Activated CD4-positive, alpha-beta memory T cell treated with anti-CD3 and anti-CD28 coated beads for 36 hours (primary cell): ENCODE measurements at regions of chr14 and their contacts with region 1.

Region 1: DNA sequence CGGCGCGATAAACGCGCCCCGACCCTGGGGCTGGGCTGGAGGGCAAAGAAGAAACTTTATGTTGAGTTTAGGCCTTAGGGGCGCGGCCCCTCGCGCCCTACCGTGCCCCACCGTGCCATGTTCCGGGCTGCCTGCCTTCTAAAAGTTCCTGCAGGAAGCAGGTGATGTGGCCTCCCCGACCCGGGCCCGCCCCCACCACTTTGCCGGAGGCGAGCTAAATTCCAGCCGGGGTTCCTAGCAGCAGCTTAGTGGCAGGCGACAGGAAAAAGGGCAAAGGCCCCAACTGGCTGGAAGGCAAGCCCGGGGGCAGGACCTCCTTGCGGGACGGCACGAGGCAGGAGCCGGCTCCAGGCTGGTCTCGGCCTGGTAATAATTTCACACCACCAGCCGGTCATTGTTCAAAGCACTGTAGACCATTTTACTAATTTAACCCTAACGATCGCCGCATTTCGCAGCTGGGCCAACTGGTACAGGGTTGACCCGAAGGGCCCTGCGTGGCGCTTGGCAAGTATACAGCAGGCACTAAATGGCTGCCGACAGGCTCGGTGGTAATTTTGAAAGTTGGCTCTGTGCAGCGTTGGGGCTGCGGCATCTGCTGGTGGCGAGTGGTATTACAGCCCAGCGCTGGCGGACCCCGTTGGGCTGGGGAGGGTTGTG is 895 bp upstream of the CCDC88C start:
- DNase-seq: peak; percentile 88
- H3K4me3 Mint-ChIP-seq: peak overlapping the region; percentile 61
- H3K27ac Mint-ChIP-seq: peak overlapping the region; percentile 72
- H3K4me1 Mint-ChIP-seq: peaks cover 32% of the 10 kb centered on the region
- H3K27me3 Mint-ChIP-seq: no peaks in the 10 kb centered on the region

Region 2: DNA sequence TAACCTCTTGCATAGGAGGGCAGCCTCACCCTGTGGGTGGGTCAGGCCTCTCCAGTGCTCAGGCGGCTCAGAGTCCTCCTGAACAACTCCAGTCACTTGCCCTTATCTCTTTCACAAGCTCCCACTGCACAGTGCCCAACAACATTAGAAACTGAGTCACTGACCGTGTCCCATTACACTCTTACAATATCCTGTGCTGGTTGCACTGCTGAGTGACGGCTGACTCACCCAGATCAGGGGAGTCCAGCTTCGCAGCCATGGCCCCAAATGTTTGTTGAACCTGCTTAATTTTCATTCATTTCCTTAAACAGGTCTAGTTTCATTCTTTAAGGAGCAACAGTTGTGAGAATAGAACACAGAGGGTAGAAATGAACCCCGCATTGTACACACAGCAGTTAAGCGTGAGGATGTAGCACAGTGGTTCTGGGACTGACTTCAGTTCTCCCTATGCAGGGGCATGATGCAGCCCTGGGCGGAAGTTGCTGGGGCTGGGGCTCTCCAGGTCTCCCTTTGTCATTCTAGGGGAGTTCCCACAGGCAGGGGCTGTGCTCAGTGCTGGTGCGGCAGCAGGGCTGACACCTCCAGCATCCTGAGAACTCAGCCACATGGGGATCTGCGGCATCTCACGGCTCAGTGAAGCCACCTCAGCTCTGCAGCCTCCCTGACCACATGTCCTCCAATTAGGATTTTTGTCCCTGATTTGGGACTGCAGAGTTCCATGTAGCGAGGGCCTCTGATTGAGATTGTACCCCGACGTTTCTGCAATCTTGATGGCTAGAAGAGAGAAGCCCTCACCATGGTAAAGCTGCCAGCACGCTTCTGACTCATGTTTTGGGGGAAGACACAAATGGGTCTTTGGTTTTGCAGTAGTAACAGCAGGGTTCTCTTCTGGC is 190.2 kb before region 1 on chr14:
- CTCF ChIA-PET with region 1: no interaction called
- POLR2A ChIA-PET with region 1: no interaction called
- intact Hi-C with region 1: loop called (anchors 1 kb)
- DNase-seq: peak; percentile 95
- H3K4me3 Mint-ChIP-seq: peak overlapping the region; percentile 59
- H3K27ac Mint-ChIP-seq: peak overlapping the region; percentile 94
- H3K4me1 Mint-ChIP-seq: peaks cover 94% of the 10 kb centered on the region
- H3K27me3 Mint-ChIP-seq: no peaks in the 10 kb centered on the region

Region 3: DNA sequence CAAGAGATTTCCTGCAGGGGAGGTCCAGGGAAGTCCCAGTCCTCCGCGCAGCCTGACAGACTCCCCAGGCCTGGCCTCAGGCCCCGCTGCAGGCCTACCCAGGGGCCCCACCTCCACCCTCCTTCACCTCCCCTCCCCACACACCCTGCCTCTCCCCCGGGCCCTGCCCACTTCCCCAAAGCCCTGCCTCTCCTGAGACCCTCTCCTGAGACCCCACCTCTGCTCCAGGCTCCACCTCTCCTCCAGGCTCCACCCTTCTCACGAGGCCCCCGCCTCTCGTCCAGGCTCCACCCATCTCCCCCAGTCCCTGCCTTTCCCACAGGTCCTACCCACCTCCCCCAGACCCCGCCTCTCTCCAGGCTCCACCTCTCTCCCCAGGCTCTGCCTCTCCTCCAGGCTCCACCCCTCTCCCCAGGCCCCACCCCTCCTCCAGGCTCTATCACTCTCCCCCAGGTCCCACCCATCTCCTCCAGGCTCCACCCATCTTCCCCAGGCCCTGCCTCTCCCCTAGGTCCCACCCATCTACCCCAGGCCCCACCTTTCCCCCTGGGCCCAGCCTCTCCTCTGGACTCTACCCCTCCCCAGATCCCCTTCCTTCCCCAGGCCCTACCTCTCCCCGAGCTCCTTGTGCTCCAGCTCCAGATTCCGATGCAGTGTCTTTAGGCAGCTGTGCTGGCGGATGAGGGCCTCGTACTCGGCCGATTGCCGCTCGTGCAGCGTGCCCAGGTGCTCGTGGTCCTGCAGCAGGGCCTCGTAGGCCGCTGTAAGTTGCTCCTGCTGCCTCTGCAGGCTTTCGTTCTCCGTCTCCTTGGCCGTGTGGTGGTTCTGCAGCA is 115.2 kb before region 1 on chr14:
- CTCF ChIA-PET with region 1: no interaction called
- POLR2A ChIA-PET with region 1: interaction called, 7 read pairs
- intact Hi-C with region 1: loop called (anchors 1 kb)
- DNase-seq: peak; percentile 94
- H3K4me3 Mint-ChIP-seq: peak overlapping the region; percentile 54
- H3K27ac Mint-ChIP-seq: peak overlapping the region; percentile 95
- H3K4me1 Mint-ChIP-seq: peaks cover 56% of the 10 kb centered on the region
- H3K27me3 Mint-ChIP-seq: no peaks in the 10 kb centered on the region

Region 4: DNA sequence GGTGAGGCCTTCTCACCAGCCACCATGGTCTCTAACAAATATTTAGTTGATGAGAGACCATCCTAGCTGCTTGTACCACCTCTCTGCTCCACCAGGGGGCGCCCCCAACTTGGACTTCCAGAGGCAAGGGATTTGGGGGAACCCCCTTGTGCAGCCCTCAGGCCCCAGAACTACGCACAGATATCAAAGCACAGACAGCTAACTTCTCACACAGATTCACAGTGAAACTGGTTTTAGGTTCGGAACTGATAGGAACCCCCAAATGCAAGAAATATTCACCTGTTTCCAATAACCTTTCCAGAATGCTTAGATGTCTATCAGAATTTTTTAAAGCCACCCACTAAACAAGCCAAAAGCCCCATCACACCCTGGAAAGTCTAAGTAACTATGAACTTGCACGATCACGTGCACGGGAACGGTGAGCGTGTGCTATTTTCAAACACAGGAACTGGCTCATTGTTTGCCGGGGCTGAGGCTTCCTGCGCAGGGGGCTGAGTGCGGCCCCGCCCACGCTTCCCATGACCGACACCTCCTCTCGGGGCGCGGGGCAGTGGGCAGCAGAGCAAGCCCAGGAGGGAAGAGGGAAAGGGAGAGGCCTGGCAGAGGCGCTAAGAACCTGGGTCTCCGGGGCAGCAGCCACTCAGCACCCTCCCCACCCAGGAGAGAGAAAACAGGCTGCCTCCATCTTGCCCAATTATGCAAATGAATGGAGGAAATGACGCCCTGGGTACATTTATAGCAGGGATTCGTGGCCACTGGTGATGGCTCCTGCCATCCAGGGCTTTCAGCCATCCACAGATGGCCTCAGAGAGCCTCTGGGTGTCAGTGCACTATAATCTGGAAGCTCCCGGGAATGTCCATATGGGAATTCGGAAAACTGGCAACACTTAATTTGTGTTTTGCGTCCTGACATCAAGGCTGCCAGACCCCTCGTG is 94.6 kb before region 1 on chr14:
- CTCF ChIA-PET with region 1: interaction called, 99 read pairs
- POLR2A ChIA-PET with region 1: interaction called, 38 read pairs
- intact Hi-C with region 1: loop called (anchors 1 kb)
- DNase-seq: peak; percentile 97
- H3K4me3 Mint-ChIP-seq: peak overlapping the region; percentile 82
- H3K27ac Mint-ChIP-seq: peak overlapping the region; percentile 99
- H3K4me1 Mint-ChIP-seq: peaks cover 62% of the 10 kb centered on the region
- H3K27me3 Mint-ChIP-seq: no peaks in the 10 kb centered on the region

Region 5: DNA sequence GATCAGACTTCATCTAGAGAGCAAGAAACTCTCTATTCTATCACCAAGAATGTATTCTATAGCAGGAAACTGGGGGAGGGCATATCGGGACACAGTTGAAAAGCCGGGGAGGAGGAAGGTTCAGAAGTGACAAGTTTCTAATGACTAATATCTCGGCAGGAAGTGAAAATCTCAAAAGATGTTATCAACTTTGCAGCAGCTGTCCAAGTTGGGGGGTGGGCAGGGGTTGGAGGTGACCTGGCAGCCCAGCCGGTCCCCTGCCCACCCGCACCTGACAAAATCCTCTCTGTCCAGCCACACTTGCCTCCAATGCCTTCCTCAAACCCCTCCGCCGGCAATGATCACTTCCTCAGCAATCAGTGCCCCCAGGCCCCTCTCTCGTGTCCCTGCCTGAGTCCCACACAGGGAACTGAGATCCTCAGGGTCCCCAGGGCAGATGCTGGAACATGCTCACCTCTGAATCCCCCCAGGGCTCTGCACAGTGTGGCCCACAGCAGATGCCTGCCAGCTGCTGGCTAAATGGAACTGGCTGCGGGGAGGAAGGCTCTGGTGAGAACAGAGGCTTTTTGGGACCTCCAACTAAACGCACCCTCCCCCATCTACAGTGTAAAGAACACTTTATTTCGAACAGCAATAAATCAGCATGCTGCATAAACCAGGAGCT is 44.8 kb before region 1 on chr14:
- CTCF ChIA-PET with region 1: interaction called, 17 read pairs
- POLR2A ChIA-PET with region 1: interaction called, 7 read pairs
- intact Hi-C with region 1: loop called (anchors 1 kb)
- DNase-seq: peak; percentile 78
- H3K4me3 Mint-ChIP-seq: peak overlapping the region; percentile 59
- H3K27ac Mint-ChIP-seq: peak overlapping the region; percentile 86
- H3K4me1 Mint-ChIP-seq: peaks cover 100% of the 10 kb centered on the region
- H3K27me3 Mint-ChIP-seq: no peaks in the 10 kb centered on the region

Region 6: DNA sequence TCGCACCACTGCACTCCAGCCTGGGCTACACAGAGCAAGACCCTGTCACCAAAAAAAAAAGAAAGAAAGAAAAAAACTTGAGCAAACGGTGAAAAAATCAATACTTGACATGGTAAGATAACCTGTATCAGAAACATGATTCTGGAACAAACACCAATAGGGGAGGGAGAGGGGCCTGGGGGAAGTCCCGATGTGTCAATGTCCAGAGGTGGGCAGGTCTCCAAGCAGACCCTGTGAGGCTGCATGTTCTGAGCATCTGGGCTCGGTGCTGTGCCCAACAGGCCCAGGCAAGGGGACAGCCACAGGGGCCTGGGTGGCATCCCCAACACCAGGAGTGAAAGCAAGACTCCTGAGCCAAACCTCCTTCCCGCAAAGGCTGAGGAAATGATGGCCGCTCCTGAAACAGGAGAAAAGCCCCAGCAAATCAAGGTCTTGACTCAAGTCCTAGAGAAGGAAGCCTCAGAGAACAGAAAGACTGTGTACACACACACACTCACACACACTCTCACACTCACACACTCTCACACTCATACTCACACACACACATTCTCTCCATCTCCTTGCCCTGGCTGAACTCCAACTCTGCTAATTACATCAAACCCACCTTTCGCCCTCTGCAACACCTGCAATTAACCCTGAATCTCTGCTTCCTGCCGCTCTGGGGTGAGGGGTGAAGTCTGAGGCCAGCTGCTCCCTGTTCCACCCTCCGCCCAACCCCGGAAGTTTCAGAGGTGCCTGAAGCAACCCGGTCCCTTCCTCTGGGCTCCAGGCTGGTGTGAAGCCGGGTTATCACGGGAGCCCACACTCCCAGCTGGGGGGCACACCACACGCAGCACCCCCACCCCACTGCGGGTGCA is 21.3 kb before region 1 on chr14:
- CTCF ChIA-PET with region 1: interaction called, 16 read pairs
- POLR2A ChIA-PET with region 1: interaction called, 41 read pairs
- intact Hi-C with region 1: loop called (anchors 1 kb)
- DNase-seq: peak; percentile 84
- H3K4me3 Mint-ChIP-seq: peak overlapping the region; percentile 64
- H3K27ac Mint-ChIP-seq: peak overlapping the region; percentile 89
- H3K4me1 Mint-ChIP-seq: peaks cover 92% of the 10 kb centered on the region
- H3K27me3 Mint-ChIP-seq: no peaks in the 10 kb centered on the region

Region 7: GRCh38 chr14:91872517-91873470 is 454.3 kb after region 1 on chr14:
- CTCF ChIA-PET with region 1: no interaction called
- POLR2A ChIA-PET with region 1: no interaction called
- intact Hi-C with region 1: loop called (anchors 5 kb)
- DNase-seq: peak; percentile 43
- H3K4me3 Mint-ChIP-seq: peak overlapping the region; percentile 69
- H3K27ac Mint-ChIP-seq: peak overlapping the region; percentile 83
- H3K4me1 Mint-ChIP-seq: peaks cover 80% of the 10 kb centered on the region
- H3K27me3 Mint-ChIP-seq: no peaks in the 10 kb centered on the region

Region 8: DNA sequence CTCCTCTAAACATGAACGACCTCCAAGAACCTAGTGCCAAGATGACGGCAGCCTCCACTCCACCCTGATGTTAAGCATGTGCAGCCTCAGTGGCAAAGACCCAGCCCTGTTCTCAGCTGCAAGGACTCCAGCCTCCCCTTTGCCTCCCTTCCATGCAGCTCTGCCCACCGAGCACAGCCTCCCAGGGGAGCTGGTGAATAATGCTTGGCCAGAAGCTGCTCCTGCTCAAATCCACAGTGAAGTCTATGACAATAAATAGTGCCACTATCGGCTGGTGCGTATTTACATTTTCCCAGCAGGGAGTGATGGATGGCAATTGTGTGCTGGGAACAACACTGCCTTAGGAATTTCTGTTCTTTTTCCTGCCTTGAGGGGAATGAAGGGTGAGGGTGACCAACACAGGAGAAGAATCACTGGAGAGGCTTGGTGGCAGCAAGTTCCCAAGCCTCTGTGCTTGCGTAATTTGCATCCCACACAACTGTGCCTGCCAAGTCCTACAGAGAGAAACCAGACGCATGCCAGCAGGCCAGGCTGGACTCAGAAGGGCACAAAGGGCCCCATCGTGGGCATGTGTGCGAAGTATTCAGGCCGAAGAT is 478.7 kb after region 1 on chr14:
- CTCF ChIA-PET with region 1: no interaction called
- POLR2A ChIA-PET with region 1: no interaction called
- intact Hi-C with region 1: no loop called
- DNase-seq: no peak
- H3K4me3 Mint-ChIP-seq: no peak overlapping the region
- H3K27ac Mint-ChIP-seq: no peak overlapping the region
- H3K4me1 Mint-ChIP-seq: peaks cover 16% of the 10 kb centered on the region
- H3K27me3 Mint-ChIP-seq: no peaks in the 10 kb centered on the region